OCI-LY7 (cell line): ENCODE measurements at regions of chr1 and their contacts with region 1.

Region 1: GRCh38 chr1:45803301-45803780 is at the start of gene MAST2:
- DNase-seq: peak; percentile 94
- H3K4me3 ChIP-seq: peak within 1 kb of the TSS; percentile 84
- H3K27ac ChIP-seq: peak within 1 kb of the TSS; percentile 53
- H3K4me1 ChIP-seq: peaks cover 21% of the 10 kb centered on the region
- CTCF ChIP-seq: no peak
- total RNA-seq, gene MAST2: 25.5 and 32.1 TPM in 2 replicates

Region 2: GRCh38 chr1:45033356-45033755 is 770.0 kb before region 1 on chr1:
- CTCF ChIA-PET with region 1: no interaction called
- POLR2A ChIA-PET with region 1: no interaction called
- intact Hi-C with region 1: no loop called
- DNase-seq: peak; percentile 82
- H3K4me3 ChIP-seq: no peak overlapping the region
- H3K27ac ChIP-seq: peak overlapping the region; percentile 42
- H3K4me1 ChIP-seq: peaks cover 18% of the 10 kb centered on the region
- CTCF ChIP-seq: no peak

Region 3: DNA sequence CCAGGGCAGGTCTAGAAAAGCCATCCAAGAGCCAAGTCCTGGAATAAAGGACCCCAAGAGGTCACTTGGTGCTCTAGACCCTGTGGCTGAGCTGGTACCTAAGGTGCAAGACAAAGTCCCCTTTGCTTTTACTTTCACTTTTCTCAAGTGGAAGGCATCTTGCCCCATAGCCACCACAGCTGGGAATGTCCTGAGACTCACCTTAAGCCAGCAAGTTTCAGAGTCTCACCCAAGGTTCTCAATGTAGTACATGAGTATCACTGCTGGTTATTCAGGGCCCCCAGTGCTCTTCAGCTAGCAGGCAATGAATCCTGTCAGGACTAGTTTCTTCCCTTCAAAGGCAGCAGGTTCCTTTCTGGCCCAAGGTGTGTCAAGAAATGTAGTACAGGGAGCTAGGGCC is 723.8 kb before region 1 on chr1:
- CTCF ChIA-PET with region 1: no interaction called
- POLR2A ChIA-PET with region 1: no interaction called
- intact Hi-C with region 1: no loop called
- DNase-seq: no peak
- H3K4me3 ChIP-seq: no peak overlapping the region
- H3K27ac ChIP-seq: no peak overlapping the region
- H3K4me1 ChIP-seq: no peaks in the 10 kb centered on the region
- CTCF ChIP-seq: no peak

Region 4: GRCh38 chr1:45750298-45751038 is 52.9 kb before region 1 on chr1 and contains the start of gene IPP:
- CTCF ChIA-PET with region 1: no interaction called
- POLR2A ChIA-PET with region 1: no interaction called
- intact Hi-C with region 1: loop called (anchors 2 kb)
- DNase-seq: peak; percentile 98
- H3K4me3 ChIP-seq: peak within 1 kb of the TSS; percentile 73
- H3K27ac ChIP-seq: peak within 1 kb of the TSS; percentile 81
- H3K4me1 ChIP-seq: peaks cover 13% of the 10 kb centered on the region
- CTCF ChIP-seq: peak; percentile 39; the same call in 1 of the 2 replicates
- total RNA-seq, gene IPP: 4.6 and 6.3 TPM in 2 replicates